Right cardiac atrium (tissue), 5 donors: ENCODE measurements at regions of chr19 and their contacts with region 1.

Region 1: GRCh38 chr19:47243776-47244547 is 12.4 kb upstream of the CCDC9 start:
- DNase-seq: peak; percentile 95 to 97 (median 96)
- ATAC-seq: peak; percentile 94 to 95
- H3K4me3 ChIP-seq: peak overlapping the region; percentile 1
- H3K27ac ChIP-seq: no peak overlapping the region
- H3K4me1 ChIP-seq: peaks cover 3% of the 10 kb centered on the region
- H3K27me3 ChIP-seq: no peaks in the 10 kb centered on the region

Region 2: DNA sequence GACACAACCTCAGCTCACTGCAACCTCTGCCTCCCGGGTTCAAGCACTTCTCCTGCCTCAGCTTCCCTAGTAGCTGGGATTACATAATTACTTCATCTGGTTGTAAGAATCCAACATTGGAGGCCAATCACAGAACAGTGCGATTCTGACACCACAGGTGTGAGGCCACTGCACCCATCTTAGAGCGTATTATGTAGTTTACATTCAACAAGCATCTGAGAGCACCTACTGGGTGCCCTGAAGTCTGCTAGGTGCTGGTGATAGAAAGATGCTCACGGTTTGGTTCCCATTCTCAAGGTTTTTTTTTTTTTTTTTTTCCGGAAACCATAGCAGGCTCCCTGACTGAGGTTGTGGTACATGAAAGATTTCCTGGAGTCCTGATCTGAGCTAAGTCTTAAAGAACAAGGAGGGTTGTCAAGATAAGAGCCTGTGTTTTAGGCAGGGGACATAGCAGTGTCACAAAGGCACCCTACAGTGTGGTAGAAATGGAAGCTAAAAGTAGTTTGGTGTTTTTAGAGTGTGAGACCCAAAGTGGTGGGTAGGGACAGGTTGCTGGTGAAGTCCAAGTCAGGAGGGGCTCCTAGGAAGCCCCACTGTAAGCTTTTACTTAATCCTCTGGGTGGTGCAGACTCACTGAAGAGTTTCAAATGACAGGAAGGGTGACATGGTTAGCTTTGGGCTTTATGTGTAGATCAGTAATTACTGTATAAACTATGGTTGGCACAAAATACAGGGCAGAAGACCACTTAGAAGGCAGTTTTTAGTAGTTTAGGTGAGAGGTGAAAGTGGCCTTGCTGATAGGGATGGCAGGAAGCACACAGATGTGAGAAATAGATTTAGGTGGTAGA is 98.1 kb before region 1 on chr19:
- intact Hi-C with region 1: loop called (anchors 2 to 5 kb)
- DNase-seq: no peak
- ATAC-seq: no peak
- H3K4me3 ChIP-seq: no peak overlapping the region
- H3K27ac ChIP-seq: no peak overlapping the region
- H3K4me1 ChIP-seq: no peaks in the 10 kb centered on the region
- H3K27me3 ChIP-seq: no peaks in the 10 kb centered on the region

Region 3: DNA sequence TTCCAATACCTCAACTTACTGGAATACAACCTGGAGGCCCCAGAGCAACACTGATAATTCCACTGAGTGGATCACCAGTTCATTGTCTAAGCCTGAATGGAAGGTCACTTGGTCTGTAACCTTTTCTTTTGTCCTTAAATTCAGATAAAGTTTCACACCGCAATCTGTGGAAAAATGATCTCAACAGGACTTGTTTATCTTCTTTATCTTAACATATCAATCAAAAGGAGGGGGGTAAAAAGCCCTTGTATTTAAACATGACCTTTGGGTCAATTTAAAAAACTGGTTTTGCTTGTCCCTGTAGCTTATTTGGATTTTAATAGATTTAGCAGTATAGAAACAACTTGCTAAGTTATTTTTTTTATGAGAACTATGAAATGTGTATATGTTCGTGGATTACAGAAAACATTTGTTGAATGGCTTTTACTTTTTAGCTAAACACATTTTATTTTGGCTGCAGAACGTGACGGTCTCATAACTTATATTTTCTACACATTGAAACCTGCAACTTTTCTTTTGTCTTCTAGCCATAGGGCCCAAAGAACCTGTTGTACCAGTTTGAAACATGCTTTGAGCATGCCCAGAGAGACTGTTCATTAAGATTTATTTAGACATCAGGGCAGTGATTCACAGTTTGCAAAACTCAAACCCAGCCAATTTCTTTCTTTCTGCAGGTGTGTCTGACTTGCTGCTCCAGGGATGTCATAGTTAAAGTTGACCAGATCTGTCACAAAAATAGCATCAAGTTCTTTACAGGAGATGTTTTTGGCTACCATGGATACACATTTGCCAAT is 91.5 kb before region 1 on chr19:
- intact Hi-C with region 1: loop called (anchors 2 to 5 kb)
- DNase-seq: no peak
- ATAC-seq: no peak
- H3K4me3 ChIP-seq: no peak overlapping the region
- H3K27ac ChIP-seq: no peak overlapping the region
- H3K4me1 ChIP-seq: peaks cover 6% of the 10 kb centered on the region
- H3K27me3 ChIP-seq: no peaks in the 10 kb centered on the region

Region 4: DNA sequence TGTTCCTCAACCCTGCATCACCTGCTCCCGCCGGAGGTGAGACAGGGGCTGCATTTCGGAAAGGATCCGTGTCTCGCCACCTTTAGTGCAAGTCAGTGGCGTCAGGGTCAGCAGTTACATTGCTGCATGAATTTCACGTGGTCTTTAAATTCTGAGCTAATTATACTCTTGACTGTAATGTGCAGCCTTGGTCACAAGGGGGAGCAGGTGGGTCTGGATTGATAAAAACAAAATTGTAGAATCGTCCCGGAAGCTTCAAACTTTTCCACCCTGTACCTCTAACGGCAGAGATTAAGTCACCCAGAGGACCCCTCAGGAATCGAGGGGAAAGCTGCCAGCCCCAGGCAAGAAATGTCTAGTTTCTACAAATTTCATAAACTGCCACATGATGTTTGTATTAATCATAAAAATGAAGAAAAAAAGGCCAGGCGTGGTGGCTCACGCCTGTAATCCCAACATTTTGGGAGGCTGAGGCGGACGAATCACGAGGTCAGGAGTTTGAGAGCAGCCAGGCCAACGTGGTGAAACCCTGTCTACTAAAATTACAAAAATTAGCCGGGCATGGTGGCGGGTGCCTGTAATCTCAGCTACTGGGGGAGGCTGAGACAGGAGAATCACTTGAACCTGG is 33.2 kb before region 1 on chr19:
- intact Hi-C with region 1: loop called in 3 of 4 experiments (anchors 2 to 5 kb)
- DNase-seq: peak in 2 of 3 donors; percentile 61 to 83
- ATAC-seq: peak; percentile 53 to 68
- H3K4me3 ChIP-seq: no peak overlapping the region
- H3K27ac ChIP-seq: peak overlapping the region; percentile 67
- H3K4me1 ChIP-seq: no peaks in the 10 kb centered on the region
- H3K27me3 ChIP-seq: no peaks in the 10 kb centered on the region